ENCODE measurements at regions of chr6 and their contacts with region 1.

Region 1: GRCh38 chr6:38027685-38028373 is 208.3 kb downstream of the ZFAND3 start:
- H3K4me3 ChIP-seq: no peak overlapping the region
- H3K27ac ChIP-seq: no peak overlapping the region
- H3K4me1 ChIP-seq: peaks cover 7% of the 10 kb centered on the region; the same call in 1 of the 2 replicates
- CTCF ChIP-seq: no peak

Region 2: GRCh38 chr6:37473397-37474095 is 554.3 kb before region 1 on chr6:
- CTCF ChIA-PET with region 1: no interaction called
- POLR2A ChIA-PET with region 1: no interaction called
- H3K4me3 ChIP-seq: no peak overlapping the region
- H3K27ac ChIP-seq: no peak overlapping the region
- H3K4me1 ChIP-seq: no peaks in the 10 kb centered on the region
- CTCF ChIP-seq: no peak

Region 3: GRCh38 chr6:37698261-37699137 is 329.3 kb before region 1 on chr6:
- CTCF ChIA-PET with region 1: interaction called, 5 read pairs
- POLR2A ChIA-PET with region 1: interaction called, 11 read pairs
- H3K4me3 ChIP-seq: peak overlapping the region; percentile 62
- H3K27ac ChIP-seq: peak overlapping the region; percentile 82
- H3K4me1 ChIP-seq: peaks cover 11% of the 10 kb centered on the region; the same call in 1 of the 2 replicates
- CTCF ChIP-seq: peak; percentile 70

Region 4: GRCh38 chr6:38157905-38158304 is 130.1 kb after region 1 on chr6:
- CTCF ChIA-PET with region 1: no interaction called
- POLR2A ChIA-PET with region 1: interaction called, 11 read pairs
- H3K4me3 ChIP-seq: no peak overlapping the region
- H3K27ac ChIP-seq: no peak overlapping the region
- H3K4me1 ChIP-seq: no peaks in the 10 kb centered on the region
- CTCF ChIP-seq: no peak

Measured in HEK293 (cell line).